Cardiac septum (tissue), 1 donor: ENCODE measurements at regions of chr9 and their contacts with region 1.

Region 1: DNA sequence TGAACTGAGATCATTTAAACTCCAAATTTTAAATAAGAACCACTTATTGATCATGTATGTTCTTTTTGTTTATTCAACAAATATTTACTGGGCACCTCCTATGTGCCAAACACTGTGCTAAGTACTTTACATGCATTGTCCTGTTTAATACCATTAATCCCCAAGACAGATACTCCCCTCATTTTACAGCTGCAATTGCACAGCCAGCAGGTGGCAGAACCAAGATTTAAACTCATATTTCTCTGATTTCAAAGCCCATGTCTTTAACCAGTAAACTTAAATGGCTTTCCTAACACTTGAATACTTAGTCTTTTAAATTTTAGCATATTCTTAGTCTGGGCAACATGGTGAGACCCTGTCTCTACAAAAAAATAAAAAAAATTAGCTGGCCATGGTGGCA is 43.4 kb upstream of the KIAA1958 start:
- DNase-seq: no peak

Region 2: DNA sequence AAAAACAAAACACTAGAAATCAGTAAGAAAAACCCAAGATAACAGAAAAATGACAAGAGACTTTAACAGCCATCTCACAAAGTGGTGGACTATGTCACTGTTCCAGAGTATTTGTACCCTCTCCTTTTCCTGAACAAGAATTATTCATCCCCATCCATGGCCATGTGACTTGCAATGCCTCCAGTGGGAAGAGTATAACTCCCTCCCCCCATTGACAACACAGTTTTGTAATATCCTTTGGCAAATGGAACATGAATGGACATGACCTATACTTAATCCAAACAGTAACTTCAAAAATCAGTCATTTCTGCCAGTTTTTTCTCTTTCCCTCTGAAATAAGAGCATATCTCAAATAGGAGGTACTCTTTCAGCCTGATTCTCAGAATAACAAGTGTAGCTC is 143.7 kb before region 1 on chr9:
- intact Hi-C with region 1: no loop called
- DNase-seq: no peak

Region 3: GRCh38 chr9:112819635-112820496 is 376.7 kb after region 1 on chr9:
- intact Hi-C with region 1: loop called (anchors 10 kb)
- DNase-seq: no peak